Gastrocnemius medialis (tissue), 4 donors: ENCODE measurements at regions of chr17 and their contacts with region 1.

Region 1: GRCh38 chr17:75109407-75110233 is at the start of gene ARMC7:
- DNase-seq: peak; percentile 63 to 83
- ATAC-seq: peak; percentile 66 to 71
- H3K4me3 ChIP-seq: peak within 1 kb of the TSS; percentile 85 to 88 (median 88)
- H3K27ac ChIP-seq: peak within 1 kb of the TSS; percentile 74 to 86 (median 79)
- H3K4me1 ChIP-seq: peaks cover 12 to 26% of the 10 kb centered on the region in 2 donors
- H3K27me3 ChIP-seq: no peaks in the 10 kb centered on the region
- CTCF ChIP-seq: no peak
- POLR2A ChIP-seq: peak; percentile 49 to 68
- total RNA-seq, gene ARMC7: 2.0 to 4.4 (median 3.0) TPM

Region 2: DNA sequence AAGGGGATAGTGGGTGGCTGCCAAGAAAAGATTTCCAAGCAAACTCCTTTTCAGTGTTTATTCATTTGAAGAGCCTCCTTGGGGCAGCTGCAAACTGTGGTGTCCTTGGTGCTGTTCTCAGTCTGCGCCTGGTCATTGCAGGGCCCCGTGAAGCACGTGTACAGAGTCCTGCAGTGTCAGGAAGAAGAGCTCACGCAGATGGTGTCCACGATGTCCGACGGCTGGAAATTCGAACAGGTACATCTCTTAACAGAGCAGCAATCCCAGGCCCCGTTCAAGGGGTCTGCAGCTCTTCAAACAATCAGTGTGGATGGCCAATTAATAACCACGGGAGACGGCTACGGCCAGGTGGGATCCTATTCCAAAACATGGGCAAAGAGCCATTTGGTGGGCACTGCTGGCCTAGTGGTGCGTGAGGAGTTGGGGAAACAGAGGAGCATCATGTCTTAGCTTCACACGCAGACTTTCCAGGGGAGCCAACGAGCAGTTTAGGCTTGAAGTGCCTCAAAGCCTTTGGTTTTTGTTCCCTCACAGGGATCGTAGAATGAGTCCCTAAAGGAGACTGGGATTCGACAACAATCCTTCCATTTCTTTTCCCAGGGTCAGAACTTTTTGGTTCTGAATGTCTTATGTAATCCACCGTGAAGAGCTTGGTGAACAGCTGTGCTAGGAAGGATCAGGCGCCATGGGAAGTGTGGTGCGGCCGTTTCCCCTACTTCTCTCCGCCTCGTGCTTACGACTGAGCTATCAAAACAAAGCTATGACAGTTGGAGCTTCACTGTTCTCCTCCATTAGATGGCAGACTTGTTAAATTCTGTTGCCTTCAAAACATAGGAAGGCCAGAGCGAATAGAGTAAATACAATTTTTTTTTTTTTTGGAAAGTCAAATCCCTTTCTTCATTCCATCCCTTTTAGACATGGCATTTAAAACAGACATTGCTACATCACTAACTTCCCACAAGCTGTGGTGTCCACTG is 50.0 kb before region 1 on chr17:
- in situ Hi-C with region 1: no loop called
- intact Hi-C with region 1: loop called (anchors 2 kb)
- DNase-seq: peak in 1 of 2 donors; percentile 61
- ATAC-seq: peak; percentile 96
- H3K4me3 ChIP-seq: peak overlapping the region in 2 of 4 donors; percentile 0 to 30
- H3K27ac ChIP-seq: peak overlapping the region; percentile 73 to 91 (median 82)
- H3K4me1 ChIP-seq: peaks cover 17 to 18% of the 10 kb centered on the region in 2 donors
- H3K27me3 ChIP-seq: no peaks in the 10 kb centered on the region
- CTCF ChIP-seq: peak; percentile 29 to 54 (median 46)
- POLR2A ChIP-seq: no peak

Region 3: DNA sequence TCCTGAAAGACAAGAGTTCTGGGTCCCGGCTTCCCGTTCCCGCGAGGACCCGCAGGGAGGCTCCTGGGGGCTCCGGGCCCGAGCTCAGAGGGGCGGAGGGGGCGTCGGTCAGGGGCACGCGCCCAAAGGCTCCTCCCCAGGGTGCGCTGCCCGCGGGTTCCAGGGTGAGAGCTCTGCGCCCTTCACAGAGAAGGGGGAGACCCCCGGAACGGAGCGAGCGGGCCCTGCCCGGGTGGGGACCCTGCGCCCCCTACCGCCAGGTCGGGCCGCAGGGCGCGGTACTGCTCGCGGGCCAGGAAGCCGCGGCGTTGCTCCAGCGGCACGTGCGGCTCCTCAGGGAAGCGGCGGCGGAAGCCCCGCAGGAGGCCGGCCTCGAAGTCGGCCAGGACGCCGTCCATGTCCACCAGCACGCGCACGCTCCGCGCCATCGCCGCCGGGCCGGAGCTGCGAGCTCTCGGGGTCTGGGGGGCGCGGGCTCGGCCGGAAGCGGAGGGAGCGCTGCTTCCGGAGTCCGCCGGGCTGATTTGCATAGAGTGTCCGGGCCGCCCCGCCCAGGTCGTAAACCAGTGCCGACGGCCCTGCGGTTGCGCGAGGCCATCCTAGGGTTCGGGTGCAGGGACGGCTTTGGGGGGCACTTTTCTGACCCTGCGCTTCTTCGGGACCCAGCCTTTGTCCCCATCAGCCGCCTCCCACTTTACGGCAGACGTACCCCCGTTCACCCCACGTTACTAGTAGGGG is 21.8 kb after region 1 on chr17 and contains the start of gene NT5C:
- in situ Hi-C with region 1: no loop called
- intact Hi-C with region 1: loop called (anchors 1 kb)
- DNase-seq: peak; percentile 62 to 77
- ATAC-seq: peak; percentile 90 to 91
- H3K4me3 ChIP-seq: peak within 1 kb of the TSS; percentile 78 to 92 (median 90)
- H3K27ac ChIP-seq: peak within 1 kb of the TSS; percentile 86 to 96 (median 90)
- H3K4me1 ChIP-seq: peaks cover 0 to 12% of the 10 kb centered on the region in 2 donors
- H3K27me3 ChIP-seq: no peaks in the 10 kb centered on the region
- CTCF ChIP-seq: peak; percentile 74 to 82 (median 76)
- POLR2A ChIP-seq: peak; percentile 36 to 72
- total RNA-seq, gene NT5C: 62.8 to 111 (median 68.0) TPM

Region 4: DNA sequence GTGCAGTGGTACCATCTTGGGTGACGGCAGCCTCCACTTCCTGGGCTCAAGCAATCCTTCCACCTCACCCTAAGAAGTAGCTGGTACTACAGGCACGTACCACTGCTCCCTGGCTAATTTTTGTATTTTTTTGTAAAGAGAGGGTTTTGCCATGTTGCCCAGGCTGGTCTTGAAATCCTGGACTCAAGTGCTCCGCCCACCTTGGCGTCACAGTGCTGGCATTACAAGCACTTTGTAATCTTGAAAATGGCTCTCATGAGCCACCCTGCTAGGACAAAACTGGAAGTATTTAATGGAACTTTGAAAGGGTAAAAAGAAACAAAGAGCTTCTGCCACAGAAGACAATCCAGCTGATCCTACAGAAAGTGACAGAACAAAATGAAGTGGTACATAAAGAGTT is 63.9 kb after region 1 on chr17:
- in situ Hi-C with region 1: loop called in 3 of 4 experiments (anchors 5 to 10 kb)
- intact Hi-C with region 1: loop called (anchors 1 kb)
- DNase-seq: no peak
- ATAC-seq: no peak
- H3K4me3 ChIP-seq: no peak overlapping the region
- H3K27ac ChIP-seq: no peak overlapping the region
- H3K4me1 ChIP-seq: no peaks in the 10 kb centered on the region
- H3K27me3 ChIP-seq: no peaks in the 10 kb centered on the region
- CTCF ChIP-seq: no peak
- POLR2A ChIP-seq: no peak

Region 5: GRCh38 chr17:75182569-75183450 is 73.2 kb after region 1 on chr17 and contains the start of gene SUMO2:
- in situ Hi-C with region 1: loop called in 3 of 4 experiments (anchors 5 to 10 kb)
- intact Hi-C with region 1: no loop called
- DNase-seq: peak; percentile 93 to 96
- ATAC-seq: peak; percentile 93 to 96
- H3K4me3 ChIP-seq: peak within 1 kb of the TSS; percentile 88 to 99 (median 93)
- H3K27ac ChIP-seq: peak within 1 kb of the TSS; percentile 90 to 100 (median 96)
- H3K4me1 ChIP-seq: peaks cover 27 to 28% of the 10 kb centered on the region in 2 donors
- H3K27me3 ChIP-seq: no peaks in the 10 kb centered on the region
- CTCF ChIP-seq: peak in 4 of 5 experiments; percentile 38 to 65 (median 48)
- POLR2A ChIP-seq: peak; percentile 72 to 79
- total RNA-seq, gene SUMO2: 36.7 to 45.1 (median 43.3) TPM

Region 6: DNA sequence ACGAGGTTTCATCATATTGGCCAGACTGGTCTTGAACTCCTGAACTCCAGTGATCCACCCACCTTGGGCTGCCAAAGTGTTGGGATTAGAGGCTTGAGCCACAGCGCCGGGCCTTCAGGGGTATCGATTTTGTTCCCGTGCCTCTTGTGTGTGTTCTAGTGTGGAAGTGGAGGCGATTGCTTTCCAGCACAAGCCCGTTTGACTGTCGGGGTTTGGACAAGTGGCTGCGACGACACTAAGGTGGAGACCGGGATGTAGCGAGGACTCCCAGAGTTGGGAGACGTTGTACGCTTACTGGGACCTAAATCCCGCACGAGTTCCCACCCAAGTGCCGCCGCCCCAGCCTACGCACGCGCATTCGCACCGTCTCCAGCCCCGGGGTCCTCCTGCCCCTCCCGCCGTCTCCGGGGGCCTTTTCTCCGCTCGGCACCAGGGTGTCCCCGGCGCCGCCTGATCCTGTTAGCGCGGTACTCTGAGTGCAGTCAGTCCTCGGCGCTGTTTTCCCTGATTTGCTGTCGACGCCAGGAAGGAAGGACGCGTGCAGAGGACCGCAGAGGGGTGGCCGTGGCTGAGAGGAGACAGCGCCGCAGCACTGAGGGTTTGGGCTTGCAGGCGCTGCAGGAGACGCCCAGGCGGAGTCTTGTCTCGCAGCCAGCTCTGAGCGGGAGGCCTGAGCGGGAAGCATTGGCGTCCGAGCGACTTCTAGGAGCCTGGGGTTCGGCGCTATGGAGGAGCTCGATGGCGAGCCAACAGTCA is 95.6 kb after region 1 on chr17 and contains the start of gene NUP85:
- in situ Hi-C with region 1: loop called in 3 of 4 experiments (anchors 10 kb)
- intact Hi-C with region 1: loop called (anchors 1 kb)
- DNase-seq: peak; percentile 88 to 91
- ATAC-seq: peak; percentile 93 to 95
- H3K4me3 ChIP-seq: peak within 1 kb of the TSS; percentile 81 to 96 (median 88)
- H3K27ac ChIP-seq: peak within 1 kb of the TSS; percentile 87 to 98 (median 95)
- H3K4me1 ChIP-seq: peaks cover 12 to 16% of the 10 kb centered on the region in 2 donors
- H3K27me3 ChIP-seq: no peaks in the 10 kb centered on the region
- CTCF ChIP-seq: peak in 4 of 5 experiments; percentile 2 to 33 (median 16)
- POLR2A ChIP-seq: peak; percentile 69 to 72
- total RNA-seq, gene NUP85: 9.4 to 27.7 (median 13.6) TPM